Dorsolateral prefrontal cortex (tissue), 120 donors: ENCODE measurements at regions of chr12 and their contacts with region 1.

Region 1: DNA sequence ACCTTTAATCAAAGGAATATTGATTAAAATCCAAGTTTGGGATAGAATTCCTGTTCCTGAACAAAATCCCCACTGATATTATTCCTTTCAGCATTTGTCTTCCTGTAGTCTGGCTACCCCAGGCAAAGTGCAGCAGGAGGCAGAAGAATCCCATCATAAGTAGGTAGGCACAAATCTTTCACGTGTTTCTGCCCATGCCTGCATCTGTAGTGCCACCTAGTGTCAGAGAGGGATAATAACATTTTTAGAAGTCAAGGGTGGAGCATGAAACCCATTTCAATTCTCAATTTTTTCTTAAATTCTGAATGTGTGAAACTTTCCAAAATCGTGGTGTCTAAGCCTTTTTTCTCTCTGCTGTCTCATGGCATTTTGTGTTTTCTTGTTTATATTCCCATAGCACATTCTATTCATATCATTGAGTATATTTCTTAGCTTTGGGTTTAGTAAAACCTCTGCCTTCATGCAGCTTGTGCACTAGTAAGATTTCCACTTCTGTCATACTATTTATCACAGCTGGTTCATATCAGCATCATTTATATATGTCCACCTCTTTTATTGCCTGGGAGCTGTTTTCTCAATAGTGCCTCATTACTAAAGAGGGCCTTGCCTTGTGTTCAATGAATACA is 47.8 kb upstream of the RERG start:
- DNase-seq: peak in 1 of 10 donors; percentile 11
- H3K4me3 ChIP-seq: no peak overlapping the region
- H3K27ac ChIP-seq: no peak overlapping the region
- H3K27me3 ChIP-seq: no peaks in the 10 kb centered on the region
- CTCF ChIP-seq: peak; percentile 63 to 97 (median 87)

Region 2: DNA sequence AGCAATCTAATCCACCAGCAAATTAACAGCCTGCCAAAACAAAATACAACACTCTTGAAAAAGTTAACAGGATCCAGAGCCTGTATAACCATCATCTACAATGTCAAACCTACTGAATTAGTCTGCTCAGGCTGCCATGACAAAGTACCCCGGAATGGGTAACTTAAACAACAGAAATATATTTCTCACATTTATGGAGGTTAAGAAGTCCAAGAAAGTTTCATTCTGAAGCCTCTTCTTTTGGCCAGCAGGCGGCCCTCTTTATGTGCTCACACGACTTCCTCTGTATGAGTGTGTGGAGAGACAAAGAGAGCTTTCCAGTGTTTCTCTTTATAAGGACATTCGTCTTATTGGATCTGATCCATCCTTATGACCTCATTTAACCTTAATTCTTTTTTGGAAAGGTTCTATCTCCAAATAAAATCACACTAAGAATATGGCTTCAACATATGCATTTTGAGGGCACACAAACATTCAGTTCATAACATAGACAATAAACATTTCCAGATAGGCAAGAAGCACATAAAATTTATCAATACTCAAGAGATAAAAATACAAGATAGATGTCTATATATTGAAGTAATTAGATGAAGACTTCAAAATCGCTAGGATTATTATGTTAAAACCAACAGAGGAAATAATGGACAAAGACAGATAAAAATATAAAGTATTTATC is 41.9 kb before region 1 on chr12:
- intact Hi-C with region 1: loop called in 1 of 2 experiments (anchors 2 kb)
- DNase-seq: peak in 2 of 10 donors; percentile 22 to 33
- H3K4me3 ChIP-seq: no peak overlapping the region
- H3K27ac ChIP-seq: no peak overlapping the region
- H3K27me3 ChIP-seq: peaks cover 0 to 4% (median 0%) of the 10 kb centered on the region in 45 donors
- CTCF ChIP-seq: peak in 55 of 56 donors; percentile 21 to 72 (median 53)

Region 3: DNA sequence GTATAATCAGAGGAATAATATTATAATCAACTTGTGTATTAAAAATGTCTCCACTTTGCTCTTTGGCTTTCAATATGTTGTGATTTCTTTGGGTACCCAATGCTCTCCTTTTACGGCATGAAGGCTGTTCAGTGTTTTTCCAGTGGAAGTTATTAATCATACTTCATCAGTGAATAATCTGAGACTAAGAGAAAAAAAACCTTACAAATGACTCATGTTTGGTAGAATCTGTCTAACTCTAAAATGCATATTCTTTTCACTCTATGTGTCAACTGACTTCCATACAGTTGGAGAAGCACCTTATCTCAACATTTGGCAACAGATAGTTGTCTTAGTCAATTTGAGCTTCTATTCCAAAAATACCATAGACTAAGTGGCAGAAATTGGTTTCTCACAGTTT is 135.4 kb after region 1 on chr12:
- intact Hi-C with region 1: no loop called
- DNase-seq: no peak
- H3K4me3 ChIP-seq: no peak overlapping the region
- H3K27ac ChIP-seq: no peak overlapping the region
- H3K27me3 ChIP-seq: no peaks in the 10 kb centered on the region
- CTCF ChIP-seq: no peak

Region 4: GRCh38 chr12:15996254-15996653 is 727.2 kb after region 1 on chr12:
- intact Hi-C with region 1: no loop called
- DNase-seq: peak in 1 of 10 donors; percentile 31
- H3K4me3 ChIP-seq: no peak overlapping the region
- H3K27ac ChIP-seq: no peak overlapping the region
- H3K27me3 ChIP-seq: no peaks in the 10 kb centered on the region
- CTCF ChIP-seq: peak in 1 of 56 donors; percentile 14